B cell (primary cell): ENCODE measurements at regions of chr14 and their contacts with region 1.

Region 1: GRCh38 chr14:24279301-24280186 is 8.1 kb upstream of the RABGGTA start:
- DNase-seq: peak; percentile 87
- ATAC-seq: peak; percentile 90
- H3K4me3 ChIP-seq: peak overlapping the region in 1 of 5 experiments; percentile 10
- H3K4me3 Mint-ChIP-seq: peak overlapping the region; percentile 75
- H3K27ac ChIP-seq: peak overlapping the region; percentile 65 to 80
- H3K27ac Mint-ChIP-seq: peak overlapping the region; percentile 93
- H3K4me1 ChIP-seq: peaks cover 38 to 60% of the 10 kb centered on the region in 2 donors
- H3K4me1 Mint-ChIP-seq: peaks cover 66% of the 10 kb centered on the region
- H3K27me3 ChIP-seq: no peaks in the 10 kb centered on the region
- H3K27me3 Mint-ChIP-seq: no peaks in the 10 kb centered on the region
- CTCF ChIP-seq: peak; percentile 53

Region 2: DNA sequence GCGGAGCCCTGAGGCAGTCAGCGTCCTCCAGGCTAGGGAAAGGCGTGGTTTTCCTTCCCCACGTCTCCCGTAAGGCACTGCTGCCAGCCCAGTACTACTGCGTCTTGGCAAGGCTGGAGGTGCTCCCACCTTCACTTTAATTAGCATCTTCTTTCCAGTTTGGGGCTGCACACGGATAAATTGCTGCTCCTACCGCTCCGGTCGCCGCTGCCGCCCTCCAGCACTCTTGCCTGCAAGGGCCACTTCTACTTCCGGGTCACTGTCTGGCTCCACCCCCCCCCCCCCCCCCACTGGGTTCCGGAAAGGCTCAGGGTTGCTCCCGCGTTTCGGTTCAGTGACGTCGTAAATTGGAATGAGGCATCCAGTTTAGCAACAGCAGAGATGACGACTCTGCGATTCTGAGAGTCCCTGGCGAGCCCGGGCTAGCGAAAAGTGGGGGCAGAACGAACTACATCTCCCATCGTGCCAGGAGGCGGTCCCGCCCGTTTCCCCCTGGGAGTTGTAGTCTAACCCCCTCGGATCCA is 47.4 kb before region 1 on chr14 and contains the start of gene NEDD8:
- CTCF ChIA-PET with region 1: no interaction called
- POLR2A ChIA-PET with region 1: no interaction called
- intact Hi-C with region 1: no loop called
- DNase-seq: peak; percentile 95
- ATAC-seq: peak; percentile 86
- H3K4me3 ChIP-seq: peak within 1 kb of the TSS; percentile 75 to 100 (median 97)
- H3K4me3 Mint-ChIP-seq: peak within 1 kb of the TSS; percentile 96
- H3K27ac ChIP-seq: peak within 1 kb of the TSS; percentile 36 to 67
- H3K27ac Mint-ChIP-seq: peak within 1 kb of the TSS; percentile 95
- H3K4me1 ChIP-seq: peaks cover 18 to 24% of the 10 kb centered on the region in 2 donors
- H3K4me1 Mint-ChIP-seq: peaks cover 55% of the 10 kb centered on the region
- H3K27me3 ChIP-seq: no peaks in the 10 kb centered on the region
- H3K27me3 Mint-ChIP-seq: no peaks in the 10 kb centered on the region
- CTCF ChIP-seq: no peak
- total RNA-seq, gene NEDD8: 86.6 and 98.5 TPM in 2 replicates

Region 3: GRCh38 chr14:24289649-24290249 is 10.2 kb after region 1 on chr14:
- CTCF ChIA-PET with region 1: interaction called, 93 read pairs
- POLR2A ChIA-PET with region 1: interaction called, 11 read pairs
- intact Hi-C with region 1: no loop called
- DNase-seq: peak; percentile 56
- ATAC-seq: peak; percentile 87
- H3K4me3 ChIP-seq: no peak overlapping the region
- H3K4me3 Mint-ChIP-seq: peak overlapping the region; percentile 34
- H3K27ac ChIP-seq: no peak overlapping the region
- H3K27ac Mint-ChIP-seq: peak overlapping the region; percentile 41
- H3K4me1 ChIP-seq: peaks cover 10 to 18% of the 10 kb centered on the region in 2 donors
- H3K4me1 Mint-ChIP-seq: peaks cover 12% of the 10 kb centered on the region
- H3K27me3 ChIP-seq: no peaks in the 10 kb centered on the region
- H3K27me3 Mint-ChIP-seq: no peaks in the 10 kb centered on the region
- CTCF ChIP-seq: no peak

Region 4: DNA sequence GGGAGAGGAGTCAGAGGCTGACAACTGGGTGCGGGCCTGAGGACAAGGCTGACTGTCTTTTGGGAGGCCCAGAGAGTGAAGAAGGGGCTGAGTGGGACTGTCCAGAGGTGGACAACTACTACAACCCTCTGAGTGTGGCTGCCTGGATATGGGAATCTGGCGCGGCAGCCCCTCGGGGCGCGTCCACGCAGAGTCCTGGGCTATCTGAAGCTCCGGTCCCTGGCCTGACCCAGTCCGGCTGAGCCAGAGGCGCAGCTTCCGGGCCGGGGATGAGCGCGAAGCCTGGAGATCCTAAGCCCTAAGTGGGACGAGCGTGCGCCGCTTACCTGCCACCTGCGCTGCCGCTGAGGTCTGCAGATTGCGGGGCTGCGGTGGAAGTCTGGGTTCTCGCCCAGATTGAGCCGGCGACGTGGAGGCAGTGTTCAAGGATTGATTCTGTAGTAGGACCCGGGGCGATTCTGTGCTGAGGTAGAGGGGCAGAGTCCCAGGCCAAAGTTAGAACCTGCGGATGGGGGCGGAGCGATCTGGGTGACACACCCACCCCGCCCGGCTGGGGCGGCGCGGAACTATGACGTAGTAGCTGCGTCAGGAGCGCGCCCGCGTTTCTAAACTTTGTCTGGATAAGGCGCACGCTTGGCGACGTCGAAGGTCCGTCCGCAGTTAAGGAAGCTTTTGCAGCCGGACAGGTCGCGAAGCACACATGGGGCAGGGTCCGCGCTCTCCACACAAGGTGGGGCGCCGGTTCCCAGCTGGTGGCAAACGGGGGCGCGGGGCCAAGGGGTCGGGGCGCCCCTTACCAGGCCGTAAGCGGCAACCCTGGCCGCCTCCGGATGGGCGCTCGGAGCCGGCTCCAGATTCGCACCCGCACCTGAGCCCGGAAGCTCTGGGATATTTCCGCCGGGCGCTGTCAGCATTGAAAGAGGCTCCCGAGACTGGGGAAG is 20.0 kb after region 1 on chr14 and contains the starts of genes DHRS1 and NOP9:
- CTCF ChIA-PET with region 1: interaction called, 93 read pairs
- POLR2A ChIA-PET with region 1: interaction called, 4 read pairs
- intact Hi-C with region 1: loop called (anchors 1 kb)
- DNase-seq: peak; percentile 95
- ATAC-seq: peak; percentile 86
- H3K4me3 ChIP-seq: peak within 1 kb of the TSS; percentile 58 to 93 (median 77)
- H3K4me3 Mint-ChIP-seq: peak within 1 kb of the TSS; percentile 96
- H3K27ac ChIP-seq: peak within 1 kb of the TSS; percentile 79 to 83
- H3K27ac Mint-ChIP-seq: peak within 1 kb of the TSS; percentile 98
- H3K4me1 ChIP-seq: peaks cover 30 to 41% of the 10 kb centered on the region in 2 donors
- H3K4me1 Mint-ChIP-seq: peaks cover 48% of the 10 kb centered on the region
- H3K27me3 ChIP-seq: no peaks in the 10 kb centered on the region
- H3K27me3 Mint-ChIP-seq: no peaks in the 10 kb centered on the region
- CTCF ChIP-seq: no peak
- total RNA-seq, gene DHRS1: 42.7 and 43.7 TPM in 2 replicates
- total RNA-seq, gene NOP9: 22.6 and 24.5 TPM in 2 replicates